Naive thymus-derived CD4-positive, alpha-beta T cell (primary cell): ENCODE measurements at regions of chr14 and their contacts with region 1.

Region 1: DNA sequence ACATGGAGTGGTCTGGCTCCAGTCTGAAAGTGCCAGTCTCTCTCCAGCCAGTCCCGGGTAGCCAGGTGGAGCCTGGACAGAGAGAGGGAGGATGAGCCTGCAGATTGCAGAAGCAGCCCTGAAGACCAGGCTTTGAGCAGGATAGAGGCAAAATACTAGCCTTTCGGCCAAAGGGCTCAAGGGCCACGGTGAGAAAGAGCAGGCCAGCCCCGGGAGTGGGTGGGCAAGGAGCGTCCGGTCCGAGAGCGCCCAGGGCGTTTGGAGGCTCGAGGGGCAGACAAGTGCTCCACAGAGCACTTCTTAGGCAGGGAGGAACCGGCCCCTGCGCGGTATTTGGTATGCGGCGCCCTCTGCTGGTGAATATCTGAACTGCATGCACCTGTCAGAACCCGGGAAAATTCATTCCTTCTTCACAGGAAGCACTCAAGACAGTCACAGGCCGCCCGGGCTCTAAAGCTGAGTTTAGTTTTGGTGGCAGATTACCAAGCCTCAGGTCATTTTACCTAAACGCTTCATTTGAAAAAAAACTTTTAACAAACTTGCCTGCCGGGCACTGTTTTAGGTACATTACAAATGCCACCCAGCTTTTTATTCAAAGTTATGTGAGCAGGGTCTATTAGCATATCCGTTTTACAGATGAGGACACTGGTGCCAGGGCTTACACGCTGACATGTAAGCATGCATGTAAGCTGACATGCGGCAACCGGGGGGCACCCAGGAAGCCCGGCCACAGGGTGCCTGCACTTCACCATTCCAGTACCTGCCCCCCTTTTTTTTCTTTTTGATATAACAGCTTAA is 21.0 kb upstream of the PSMC1 start:
- DNase-seq: peak in 8 of 9 donors; percentile 16 to 75 (median 44)
- ATAC-seq: peak; percentile 86
- H3K4me3 ChIP-seq: no peak overlapping the region
- H3K4me3 Mint-ChIP-seq: peak overlapping the region in 1 of 10 donors; percentile 21
- H3K27ac ChIP-seq: no peak overlapping the region
- H3K27ac Mint-ChIP-seq: peak overlapping the region in 1 of 9 donors; percentile 41
- H3K4me1 ChIP-seq: no peaks in the 10 kb centered on the region
- H3K4me1 Mint-ChIP-seq: peaks cover 0 to 6% (median 0%) of the 10 kb centered on the region in 7 donors
- H3K27me3 ChIP-seq: no peaks in the 10 kb centered on the region
- H3K27me3 Mint-ChIP-seq: peaks cover 9 to 33% (median 27%) of the 10 kb centered on the region in 5 donors

Region 2: GRCh38 chr14:88824314-88825077 is 1410.9 kb before region 1 on chr14 and contains the start of gene TTC8:
- CTCF ChIA-PET with region 1: no interaction called
- POLR2A ChIA-PET with region 1: no interaction called
- intact Hi-C with region 1: loop called in 1 of 2 experiments (anchors 5 kb)
- DNase-seq: peak; percentile 75 to 92 (median 88)
- ATAC-seq: peak; percentile 98
- H3K4me3 ChIP-seq: peak within 1 kb of the TSS; percentile 74
- H3K4me3 Mint-ChIP-seq: peak within 1 kb of the TSS; percentile 72 to 98 (median 90)
- H3K27ac ChIP-seq: peak within 1 kb of the TSS; percentile 85
- H3K27ac Mint-ChIP-seq: peak within 1 kb of the TSS; percentile 97 to 99 (median 99)
- H3K4me1 ChIP-seq: peaks cover 5 to 6% of the 10 kb centered on the region in 2 donors
- H3K4me1 Mint-ChIP-seq: peaks cover 0 to 13% (median 11%) of the 10 kb centered on the region in 7 donors
- H3K27me3 ChIP-seq: no peaks in the 10 kb centered on the region
- H3K27me3 Mint-ChIP-seq: peaks cover 0 to 30% (median 8%) of the 10 kb centered on the region in 5 donors
- total RNA-seq, gene TTC8: 1.8 to 3.4 (median 2.1) TPM

Region 3: GRCh38 chr14:89027097-89027740 is 1208.2 kb before region 1 on chr14:
- CTCF ChIA-PET with region 1: no interaction called
- POLR2A ChIA-PET with region 1: no interaction called
- intact Hi-C with region 1: loop called (anchors 10 kb)
- DNase-seq: peak; percentile 32 to 76 (median 63)
- ATAC-seq: peak; percentile 92
- H3K4me3 ChIP-seq: peak overlapping the region; percentile 66
- H3K4me3 Mint-ChIP-seq: peak overlapping the region; percentile 65 to 79 (median 68)
- H3K27ac ChIP-seq: no peak overlapping the region
- H3K27ac Mint-ChIP-seq: no peak overlapping the region
- H3K4me1 ChIP-seq: peaks cover 4 to 5% of the 10 kb centered on the region in 2 donors
- H3K4me1 Mint-ChIP-seq: peaks cover 0 to 7% (median 0%) of the 10 kb centered on the region in 7 donors
- H3K27me3 ChIP-seq: peaks cover 0 to 15% of the 10 kb centered on the region in 2 donors
- H3K27me3 Mint-ChIP-seq: peaks cover 63 to 79% (median 67%) of the 10 kb centered on the region in 5 donors

Region 4: DNA sequence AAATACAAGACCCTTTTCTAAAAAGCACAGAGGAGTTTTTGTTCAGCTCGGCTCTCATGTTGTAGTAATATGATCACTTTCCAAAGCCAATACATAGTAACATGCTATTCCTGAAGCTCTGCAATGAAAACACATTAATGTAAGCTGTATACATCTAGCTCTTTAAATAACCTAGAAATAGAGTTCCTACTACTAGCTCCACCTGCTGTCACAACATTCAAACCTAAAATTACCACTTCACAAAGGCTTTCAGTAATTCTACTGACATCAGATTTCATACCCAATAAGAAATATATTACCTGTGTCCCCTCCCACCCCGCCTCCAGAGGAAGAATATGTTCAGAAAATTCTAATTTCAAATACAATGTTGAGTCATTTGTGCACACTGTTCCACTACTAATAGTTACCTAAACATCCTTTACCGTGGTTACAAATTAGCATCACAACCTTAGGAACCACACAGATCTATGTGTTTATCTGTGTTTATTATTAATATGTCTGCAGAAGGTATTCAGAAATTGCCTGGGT is 298.7 kb before region 1 on chr14:
- CTCF ChIA-PET with region 1: interaction called, 6 read pairs
- POLR2A ChIA-PET with region 1: no interaction called
- intact Hi-C with region 1: loop called in 1 of 2 experiments (anchors 1 kb)
- DNase-seq: no peak
- ATAC-seq: no peak
- H3K4me3 ChIP-seq: no peak overlapping the region
- H3K4me3 Mint-ChIP-seq: no peak overlapping the region
- H3K27ac ChIP-seq: no peak overlapping the region
- H3K27ac Mint-ChIP-seq: no peak overlapping the region
- H3K4me1 ChIP-seq: no peaks in the 10 kb centered on the region
- H3K4me1 Mint-ChIP-seq: no peaks in the 10 kb centered on the region
- H3K27me3 ChIP-seq: no peaks in the 10 kb centered on the region
- H3K27me3 Mint-ChIP-seq: peaks cover 0 to 5% (median 0%) of the 10 kb centered on the region in 5 donors

Region 5: GRCh38 chr14:89973234-89973823 is 262.0 kb before region 1 on chr14:
- CTCF ChIA-PET with region 1: no interaction called
- POLR2A ChIA-PET with region 1: no interaction called
- intact Hi-C with region 1: loop called in 1 of 2 experiments (anchors 1 kb)
- DNase-seq: peak in 7 of 9 donors; percentile 21 to 44 (median 37)
- ATAC-seq: peak; percentile 76
- H3K4me3 ChIP-seq: no peak overlapping the region
- H3K4me3 Mint-ChIP-seq: no peak overlapping the region
- H3K27ac ChIP-seq: no peak overlapping the region
- H3K27ac Mint-ChIP-seq: no peak overlapping the region
- H3K4me1 ChIP-seq: no peaks in the 10 kb centered on the region
- H3K4me1 Mint-ChIP-seq: peaks cover 0 to 19% (median 3%) of the 10 kb centered on the region in 7 donors
- H3K27me3 ChIP-seq: no peaks in the 10 kb centered on the region
- H3K27me3 Mint-ChIP-seq: no peaks in the 10 kb centered on the region

Region 6: DNA sequence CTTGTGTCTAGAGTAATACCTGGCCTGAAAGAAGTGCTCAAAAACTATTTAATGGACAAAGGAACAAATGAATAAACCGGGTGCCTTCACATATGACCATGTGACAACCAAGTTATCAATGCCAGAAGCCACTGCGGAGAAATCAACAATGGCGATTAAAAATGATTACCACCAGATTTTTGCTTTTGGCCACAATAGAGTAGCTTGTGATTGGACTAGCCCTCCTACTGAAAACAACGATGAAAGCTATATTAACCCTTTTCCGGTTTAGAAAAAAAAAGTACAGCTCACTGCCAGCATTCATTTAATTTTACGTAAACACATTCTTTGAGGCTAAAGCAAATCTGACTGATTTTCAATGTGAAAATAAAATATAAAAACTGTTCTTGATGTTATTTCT is 622.5 kb after region 1 on chr14:
- CTCF ChIA-PET with region 1: no interaction called
- POLR2A ChIA-PET with region 1: no interaction called
- intact Hi-C with region 1: no loop called
- DNase-seq: no peak
- ATAC-seq: no peak
- H3K4me3 ChIP-seq: no peak overlapping the region
- H3K4me3 Mint-ChIP-seq: no peak overlapping the region
- H3K27ac ChIP-seq: no peak overlapping the region
- H3K27ac Mint-ChIP-seq: no peak overlapping the region
- H3K4me1 ChIP-seq: no peaks in the 10 kb centered on the region
- H3K4me1 Mint-ChIP-seq: peaks cover 0 to 4% (median 0%) of the 10 kb centered on the region in 7 donors
- H3K27me3 ChIP-seq: no peaks in the 10 kb centered on the region
- H3K27me3 Mint-ChIP-seq: no peaks in the 10 kb centered on the region